Activated CD4-positive, alpha-beta memory T cell treated with anti-CD3 and anti-CD28 coated beads, Interleukin-2, amount 10 ng/mL, durations not matched to agents 7 days and 5 days (primary cell): ENCODE measurements at regions of chr7 and their contacts with region 1.

Region 1: DNA sequence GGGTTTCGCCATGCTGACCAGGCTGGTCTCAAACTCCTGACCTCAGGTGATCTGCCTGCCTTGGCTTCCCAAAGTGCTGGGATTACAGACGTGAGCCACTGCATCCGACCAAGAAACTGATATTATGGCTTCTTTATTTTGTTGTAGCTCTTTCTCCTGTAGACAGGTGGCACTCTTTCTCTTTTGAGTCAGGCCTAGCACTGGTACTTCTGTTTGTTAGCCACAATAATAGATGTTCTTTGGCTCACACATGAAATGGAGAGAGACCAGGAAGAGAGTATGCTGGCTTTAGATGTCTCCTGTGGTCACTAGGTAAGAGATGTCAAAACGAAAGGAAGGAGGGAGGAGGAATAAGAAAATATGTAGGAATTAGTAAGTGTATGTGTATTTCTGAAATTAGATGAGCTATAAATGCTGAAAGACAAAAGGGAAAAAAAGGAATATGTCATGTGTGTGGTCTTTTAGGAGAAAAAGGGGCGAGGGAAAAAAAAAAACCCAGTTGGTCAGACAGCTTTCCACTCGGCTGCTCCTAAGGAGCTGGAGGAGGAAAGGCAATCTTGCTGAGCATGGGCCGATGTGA is 78.7 kb downstream of the CLEC2L start:
- DNase-seq: no peak
- H3K4me3 Mint-ChIP-seq: no peak overlapping the region
- H3K27ac Mint-ChIP-seq: no peak overlapping the region
- H3K4me1 Mint-ChIP-seq: no peaks in the 10 kb centered on the region
- H3K27me3 Mint-ChIP-seq: no peaks in the 10 kb centered on the region

Region 2: GRCh38 chr7:139328375-139328774 is 273.9 kb before region 1 on chr7:
- CTCF ChIA-PET with region 1: no interaction called
- POLR2A ChIA-PET with region 1: no interaction called
- DNase-seq: no peak
- H3K4me3 Mint-ChIP-seq: no peak overlapping the region
- H3K27ac Mint-ChIP-seq: no peak overlapping the region
- H3K4me1 Mint-ChIP-seq: peaks cover 14% of the 10 kb centered on the region
- H3K27me3 Mint-ChIP-seq: no peaks in the 10 kb centered on the region

Region 3: DNA sequence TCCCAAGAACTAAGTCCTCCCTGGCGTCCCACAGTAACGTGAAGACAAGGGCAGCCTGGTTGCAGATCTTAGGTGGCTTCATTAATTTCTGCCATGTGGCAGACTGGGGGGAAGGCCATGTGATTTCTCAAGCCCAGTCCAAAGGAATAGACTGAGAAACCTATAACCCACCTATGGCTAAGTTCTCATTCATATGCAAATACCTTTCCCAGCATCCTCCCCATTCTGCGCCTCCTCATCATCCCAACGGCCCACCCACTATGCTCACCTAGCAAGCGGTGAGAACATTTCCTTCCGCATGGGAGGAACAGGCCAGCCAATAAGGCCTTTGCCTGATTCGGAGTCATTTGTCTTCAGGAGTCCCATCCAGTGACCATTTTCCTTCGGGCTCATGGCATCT is 87.0 kb before region 1 on chr7:
- CTCF ChIA-PET with region 1: no interaction called
- POLR2A ChIA-PET with region 1: no interaction called
- DNase-seq: no peak
- H3K4me3 Mint-ChIP-seq: no peak overlapping the region
- H3K27ac Mint-ChIP-seq: no peak overlapping the region
- H3K4me1 Mint-ChIP-seq: peaks cover 2% of the 10 kb centered on the region
- H3K27me3 Mint-ChIP-seq: peaks cover 3% of the 10 kb centered on the region

Region 4: DNA sequence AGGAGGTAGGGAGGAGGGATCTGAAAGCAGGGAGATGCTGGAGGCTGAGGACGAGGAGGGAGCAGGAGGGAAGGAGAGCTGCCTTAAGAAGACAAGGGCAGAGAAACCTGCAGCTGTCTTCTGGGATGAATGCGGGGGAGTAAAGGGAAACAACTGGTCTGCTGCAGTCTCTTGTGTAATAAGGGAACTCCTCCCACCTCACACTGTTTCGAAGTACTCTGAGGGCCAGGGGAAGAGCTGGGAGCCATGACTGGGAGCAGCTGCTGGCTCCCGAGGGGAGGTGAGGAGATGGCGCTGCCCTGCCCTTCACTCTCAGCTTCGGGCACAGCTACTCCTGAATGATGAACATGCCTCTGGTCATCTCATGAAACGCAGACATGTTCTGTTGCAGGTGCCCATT is 13.6 kb before region 1 on chr7:
- CTCF ChIA-PET with region 1: interaction called, 25 read pairs
- POLR2A ChIA-PET with region 1: no interaction called
- DNase-seq: no peak
- H3K4me3 Mint-ChIP-seq: no peak overlapping the region
- H3K27ac Mint-ChIP-seq: no peak overlapping the region
- H3K4me1 Mint-ChIP-seq: no peaks in the 10 kb centered on the region
- H3K27me3 Mint-ChIP-seq: no peaks in the 10 kb centered on the region

Region 5: DNA sequence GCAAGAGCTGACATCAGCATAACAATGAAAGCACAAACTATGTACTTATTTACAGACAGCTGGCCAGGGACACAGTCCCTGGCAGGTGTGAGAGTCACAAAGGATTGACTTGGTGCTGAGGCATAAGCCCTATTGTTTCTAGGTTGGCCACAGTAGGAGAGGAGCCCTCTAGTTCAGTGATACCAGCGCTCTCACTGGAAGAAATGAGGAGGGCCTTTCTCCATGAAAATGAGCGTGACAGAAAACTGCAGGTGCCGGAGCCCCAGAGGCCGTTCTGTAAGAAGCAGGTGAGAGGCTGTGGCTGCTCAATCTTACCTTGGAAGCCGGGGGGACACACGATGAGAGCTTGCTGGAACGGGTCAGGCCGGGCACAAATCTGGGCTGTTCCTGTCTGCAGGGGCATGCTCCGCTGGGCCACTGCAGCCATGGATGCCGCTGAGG is 11.8 kb after region 1 on chr7:
- CTCF ChIA-PET with region 1: interaction called, 61 read pairs
- POLR2A ChIA-PET with region 1: no interaction called
- DNase-seq: no peak
- H3K4me3 Mint-ChIP-seq: no peak overlapping the region
- H3K27ac Mint-ChIP-seq: no peak overlapping the region
- H3K4me1 Mint-ChIP-seq: no peaks in the 10 kb centered on the region
- H3K27me3 Mint-ChIP-seq: no peaks in the 10 kb centered on the region

Region 6: DNA sequence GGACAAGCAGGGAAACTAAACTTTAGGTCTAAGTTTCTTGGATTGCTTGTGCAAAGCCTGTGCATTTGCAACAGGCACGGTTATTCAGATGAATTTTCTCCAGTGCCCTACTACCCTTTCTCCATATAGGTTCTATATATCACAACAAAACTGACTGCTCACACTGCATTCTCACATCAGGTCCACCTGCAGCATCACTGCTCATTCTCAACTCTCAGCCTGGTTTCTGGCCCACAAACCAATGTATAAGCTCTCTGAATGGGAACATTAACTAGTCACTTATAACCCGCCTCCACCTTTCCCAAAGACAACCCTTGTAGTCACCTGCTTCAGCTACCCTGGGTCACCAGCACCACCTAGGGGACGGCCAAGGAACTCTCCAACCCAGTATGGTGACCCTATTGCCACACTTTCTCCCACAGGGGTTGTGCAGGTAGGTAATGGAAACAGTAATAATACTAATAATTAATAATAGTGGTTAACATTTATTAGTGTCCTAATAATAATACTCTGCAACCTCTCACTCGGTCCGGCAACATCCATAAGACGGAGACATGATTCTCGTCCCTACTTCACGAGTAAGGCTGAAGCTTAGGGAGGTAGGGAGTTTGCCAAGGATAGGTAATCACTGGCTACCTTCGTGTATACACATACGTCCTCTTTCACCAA is 18.6 kb after region 1 on chr7:
- CTCF ChIA-PET with region 1: interaction called, 61 read pairs
- POLR2A ChIA-PET with region 1: no interaction called
- DNase-seq: peak; percentile 64
- H3K4me3 Mint-ChIP-seq: no peak overlapping the region
- H3K27ac Mint-ChIP-seq: no peak overlapping the region
- H3K4me1 Mint-ChIP-seq: peaks cover 23% of the 10 kb centered on the region
- H3K27me3 Mint-ChIP-seq: no peaks in the 10 kb centered on the region

Region 7: DNA sequence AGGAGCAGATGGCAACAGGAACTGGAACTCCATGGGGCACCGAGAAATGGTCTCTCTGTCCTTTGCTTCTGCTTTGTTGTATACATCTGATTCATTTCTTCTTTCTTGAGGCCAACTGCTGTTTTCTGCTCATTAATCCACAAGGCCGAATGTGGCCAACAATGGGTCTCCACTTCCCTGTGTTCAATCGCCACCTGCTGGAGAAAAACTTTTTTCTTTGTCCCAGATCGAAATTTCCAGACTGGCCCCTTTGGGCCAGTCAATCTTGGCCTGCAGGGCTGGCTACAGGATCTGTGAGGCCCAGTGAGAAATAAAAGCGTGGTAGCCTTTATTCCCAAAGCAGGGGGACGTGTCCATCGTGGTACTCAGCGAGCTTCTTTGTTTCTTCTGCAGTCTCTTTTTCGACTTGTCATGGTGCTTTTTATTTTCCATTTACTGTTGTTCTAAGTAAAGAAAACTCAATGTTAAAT is 401.7 kb after region 1 on chr7:
- CTCF ChIA-PET with region 1: interaction called, 42 read pairs
- POLR2A ChIA-PET with region 1: no interaction called
- DNase-seq: peak; percentile 39
- H3K4me3 Mint-ChIP-seq: no peak overlapping the region
- H3K27ac Mint-ChIP-seq: no peak overlapping the region
- H3K4me1 Mint-ChIP-seq: no peaks in the 10 kb centered on the region
- H3K27me3 Mint-ChIP-seq: no peaks in the 10 kb centered on the region